ENCODE measurements at regions of chr10 and their contacts with region 1.

Region 1: GRCh38 chr10:29304264-29305030 is 15.6 kb downstream of the LYZL1 start:
- DNase-seq: peak in 9 of 10 donors; percentile 13 to 73 (median 59)
- H3K4me3 ChIP-seq: peak overlapping the region in 22 of 59 donors; percentile 1 to 46 (median 20)
- H3K27ac ChIP-seq: peak overlapping the region in 48 of 59 donors; percentile 1 to 79 (median 54)
- H3K27me3 ChIP-seq: peaks cover 0 to 8% (median 0%) of the 10 kb centered on the region in 45 donors
- CTCF ChIP-seq: peak; percentile 80 to 99 (median 92)

Region 2: GRCh38 chr10:28628184-28628893 is 676.1 kb before region 1 on chr10:
- intact Hi-C with region 1: loop called (anchors 2 to 5 kb)
- DNase-seq: peak; percentile 66 to 86 (median 80)
- H3K4me3 ChIP-seq: peak overlapping the region in 3 of 59 donors; percentile 10 to 19 (median 19)
- H3K27ac ChIP-seq: no peak overlapping the region
- H3K27me3 ChIP-seq: peaks cover 0 to 14% (median 0%) of the 10 kb centered on the region in 45 donors
- CTCF ChIP-seq: peak; percentile 75 to 96 (median 92)

Region 3: DNA sequence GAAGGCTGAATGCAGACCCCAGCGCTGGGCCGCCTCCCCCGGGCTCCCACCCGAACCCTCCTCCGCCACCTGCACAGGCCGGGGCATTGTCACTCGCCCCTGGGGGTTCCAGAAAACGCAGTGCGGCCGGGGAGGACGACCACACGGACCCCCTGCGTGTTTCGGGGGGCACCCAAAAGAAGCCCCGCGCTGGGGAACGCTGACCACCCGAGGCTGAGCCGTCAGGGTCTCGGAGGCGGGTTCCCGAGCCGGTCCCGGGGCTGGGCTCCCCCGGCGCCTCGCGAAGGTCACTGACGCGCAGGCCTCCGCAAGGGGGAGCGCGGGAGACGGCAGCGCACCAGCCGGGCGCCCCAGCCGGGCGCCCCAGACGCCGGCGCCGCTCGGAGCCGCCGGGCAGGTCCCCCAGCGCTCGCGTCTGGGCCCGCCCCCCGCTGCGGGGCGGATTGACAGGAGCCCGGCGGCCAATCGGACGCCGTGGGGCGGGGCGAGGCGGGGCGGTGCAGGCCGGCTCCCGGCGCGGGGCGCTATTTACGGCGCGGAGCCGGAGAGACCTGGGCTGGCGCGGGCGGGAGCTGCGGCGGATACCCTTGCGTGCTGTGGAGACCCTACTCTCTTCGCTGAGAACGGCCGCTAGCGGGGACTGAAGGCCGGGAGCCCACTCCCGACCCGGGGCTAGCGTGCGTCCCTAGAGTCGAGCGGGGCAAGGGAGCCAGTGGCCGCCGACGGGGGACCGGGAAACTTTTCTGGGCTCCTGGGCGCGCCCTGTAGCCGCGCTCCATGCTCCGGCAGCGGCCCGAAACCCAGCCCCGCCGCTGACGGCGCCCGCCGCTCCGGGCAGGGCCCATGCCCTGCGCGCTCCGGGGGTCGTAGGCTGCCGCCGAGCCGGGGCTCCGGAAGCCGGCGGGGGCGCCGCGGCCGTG is 627.2 kb before region 1 on chr10 and contains the start of gene BAMBI:
- intact Hi-C with region 1: loop called (anchors 5 kb)
- DNase-seq: peak; percentile 62 to 98 (median 90)
- H3K4me3 ChIP-seq: peak within 1 kb of the TSS; percentile 62 to 100 (median 83)
- H3K27ac ChIP-seq: peak within 1 kb of the TSS in 55 of 59 donors; percentile 38 to 92 (median 78)
- H3K27me3 ChIP-seq: peaks cover 0 to 10% (median 0%) of the 10 kb centered on the region in 45 donors
- CTCF ChIP-seq: peak in 55 of 56 donors; percentile 14 to 96 (median 64)
- total RNA-seq, gene BAMBI: 4.1 to 18.6 (median 8.8) TPM

Region 4: DNA sequence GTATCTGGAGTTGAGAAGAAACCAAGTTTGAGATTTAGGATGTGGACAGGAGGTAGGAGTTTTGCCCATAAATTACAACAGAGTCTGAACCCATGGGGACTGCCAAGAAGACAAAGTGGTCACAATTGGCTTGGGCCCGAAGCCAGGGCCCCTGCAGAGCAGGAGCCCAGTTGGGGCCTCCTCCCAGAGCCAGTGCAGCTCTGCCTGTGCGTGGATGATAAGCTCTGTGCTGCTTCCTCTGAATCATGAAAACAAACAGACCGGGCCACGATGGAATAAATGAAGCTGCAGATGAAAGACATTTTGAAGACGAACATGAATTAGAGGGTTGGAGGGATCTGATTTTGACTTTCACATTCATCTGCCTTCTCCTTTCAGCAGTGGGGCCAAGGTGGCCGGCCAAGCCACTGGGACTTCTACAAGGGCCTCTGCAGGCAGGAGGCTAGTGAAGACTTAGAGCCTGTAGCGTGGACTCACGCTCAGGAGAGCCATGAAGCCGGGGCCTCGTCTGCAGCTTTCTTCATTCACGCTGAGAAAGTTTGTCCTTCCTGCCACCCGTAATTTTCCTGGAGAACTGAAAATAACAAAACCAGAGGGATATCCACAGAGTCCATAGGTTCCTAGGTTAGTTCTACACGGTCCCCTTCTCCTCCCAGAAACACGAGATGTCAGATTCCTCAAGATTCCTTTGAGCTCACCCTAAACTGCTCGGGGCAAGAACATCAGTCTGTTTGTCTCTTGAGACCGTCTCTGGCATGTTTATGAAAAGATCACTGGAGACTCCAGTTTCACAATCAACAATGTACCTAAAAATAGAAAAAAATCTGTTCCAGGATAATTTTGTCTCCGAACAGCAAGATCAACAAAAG is 172.3 kb before region 1 on chr10:
- intact Hi-C with region 1: loop called in 1 of 2 experiments (anchors 5 kb)
- DNase-seq: no peak
- H3K4me3 ChIP-seq: peak overlapping the region in 1 of 59 donors; percentile 1
- H3K27ac ChIP-seq: peak overlapping the region in 31 of 59 donors; percentile 4 to 80 (median 47)
- H3K27me3 ChIP-seq: peaks cover 0 to 14% (median 0%) of the 10 kb centered on the region in 45 donors
- CTCF ChIP-seq: no peak

Region 5: DNA sequence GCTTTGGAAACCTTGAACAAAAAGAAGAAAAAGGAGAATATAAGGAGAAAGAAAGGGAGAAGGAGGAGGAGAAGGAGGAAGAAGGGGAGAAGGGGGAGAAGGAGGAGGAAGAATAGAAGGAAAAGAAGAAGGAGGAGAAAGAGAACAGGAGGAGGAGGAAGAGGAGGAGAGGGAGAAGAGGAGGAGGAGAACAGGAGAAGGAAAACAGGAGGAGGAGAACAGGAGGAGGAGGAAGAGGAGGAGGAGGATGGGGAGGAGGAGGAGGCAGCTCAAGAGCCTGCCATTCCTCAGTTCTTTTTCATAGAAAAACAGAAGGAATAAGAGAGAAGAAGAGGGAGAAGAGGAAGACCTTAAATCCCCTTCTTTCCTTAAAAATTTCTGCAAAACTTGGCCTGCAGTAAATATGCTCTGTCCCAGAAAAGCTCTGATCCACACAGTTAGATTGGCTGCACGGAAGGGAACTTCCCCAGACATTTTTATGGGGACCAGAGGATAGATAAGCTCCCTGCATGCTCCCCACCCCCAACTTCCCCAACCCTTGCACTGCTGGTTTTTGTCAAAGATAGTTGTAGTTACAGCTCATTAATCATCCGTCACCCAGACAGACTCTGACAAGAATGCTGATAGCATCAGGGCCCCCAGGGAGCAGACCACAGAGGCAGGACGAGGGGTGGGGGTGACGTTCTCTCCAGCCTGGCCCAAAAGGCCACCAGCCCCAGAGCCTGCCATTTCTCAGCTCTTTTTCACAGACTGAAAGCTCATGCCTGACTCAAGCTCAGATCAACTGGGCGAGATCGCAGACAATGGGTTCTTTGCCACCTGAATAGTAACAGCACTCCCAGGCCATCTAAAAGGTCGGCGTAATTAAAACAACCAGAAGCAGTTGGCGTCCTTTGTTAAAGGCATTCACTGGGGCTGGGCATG is 50.1 kb before region 1 on chr10:
- intact Hi-C with region 1: loop called (anchors 5 kb)
- DNase-seq: no peak
- H3K4me3 ChIP-seq: no peak overlapping the region
- H3K27ac ChIP-seq: no peak overlapping the region
- H3K27me3 ChIP-seq: peaks cover 0 to 9% (median 0%) of the 10 kb centered on the region in 45 donors
- CTCF ChIP-seq: no peak

Region 6: GRCh38 chr10:29377333-29377961 is 73.0 kb after region 1 on chr10:
- intact Hi-C with region 1: no loop called
- DNase-seq: no peak
- H3K4me3 ChIP-seq: no peak overlapping the region
- H3K27ac ChIP-seq: no peak overlapping the region
- H3K27me3 ChIP-seq: peaks cover 0 to 10% (median 0%) of the 10 kb centered on the region in 45 donors
- CTCF ChIP-seq: peak; percentile 45 to 79 (median 66)

Measured in dorsolateral prefrontal cortex (tissue), 120 donors.